ENCODE measurements at regions of chr17 and their contacts with region 1.

Region 1: GRCh38 chr17:41648411-41649195 is 24.2 kb upstream of the KRT17 start:
- DNase-seq: peak; percentile 82
- H3K4me3 ChIP-seq: peak overlapping the region; percentile 41
- H3K27ac ChIP-seq: peak overlapping the region; percentile 61
- H3K4me1 ChIP-seq: peaks cover 6% of the 10 kb centered on the region
- H3K27me3 ChIP-seq: no peaks in the 10 kb centered on the region
- CTCF ChIP-seq: peak; percentile 78

Region 2: GRCh38 chr17:40629842-40630241 is 1018.8 kb before region 1 on chr17:
- CTCF ChIA-PET with region 1: interaction called, 3 read pairs
- POLR2A ChIA-PET with region 1: interaction called, 16 read pairs
- intact Hi-C with region 1: no loop called
- DNase-seq: no peak
- H3K4me3 ChIP-seq: no peak overlapping the region
- H3K27ac ChIP-seq: no peak overlapping the region
- H3K4me1 ChIP-seq: no peaks in the 10 kb centered on the region
- H3K27me3 ChIP-seq: no peaks in the 10 kb centered on the region
- CTCF ChIP-seq: no peak

Region 3: DNA sequence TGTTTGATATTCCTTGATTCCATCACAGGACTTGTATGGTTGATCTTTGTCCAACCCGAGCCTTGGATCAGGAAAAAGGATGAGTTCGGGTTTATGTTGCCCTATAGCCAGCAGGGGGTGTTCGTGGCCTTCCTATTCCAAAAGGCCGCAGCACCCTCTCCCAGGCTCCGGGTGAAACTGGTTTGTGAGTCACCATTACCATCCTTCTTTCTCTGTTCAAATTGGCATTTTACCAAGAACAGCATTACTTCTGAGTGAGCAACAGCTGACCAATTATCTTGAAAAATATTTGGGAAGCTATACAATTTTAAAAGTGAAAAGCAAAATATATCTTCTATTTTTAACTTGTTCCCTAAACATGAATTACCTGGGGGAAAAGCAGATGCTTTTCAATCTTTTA is 739.3 kb before region 1 on chr17:
- CTCF ChIA-PET with region 1: interaction called, 5 read pairs
- POLR2A ChIA-PET with region 1: no interaction called
- intact Hi-C with region 1: loop called (anchors 5 kb)
- DNase-seq: peak; percentile 93
- H3K4me3 ChIP-seq: no peak overlapping the region
- H3K27ac ChIP-seq: peak overlapping the region; percentile 87
- H3K4me1 ChIP-seq: peaks cover 32% of the 10 kb centered on the region
- H3K27me3 ChIP-seq: no peaks in the 10 kb centered on the region
- CTCF ChIP-seq: peak; percentile 64

Region 4: DNA sequence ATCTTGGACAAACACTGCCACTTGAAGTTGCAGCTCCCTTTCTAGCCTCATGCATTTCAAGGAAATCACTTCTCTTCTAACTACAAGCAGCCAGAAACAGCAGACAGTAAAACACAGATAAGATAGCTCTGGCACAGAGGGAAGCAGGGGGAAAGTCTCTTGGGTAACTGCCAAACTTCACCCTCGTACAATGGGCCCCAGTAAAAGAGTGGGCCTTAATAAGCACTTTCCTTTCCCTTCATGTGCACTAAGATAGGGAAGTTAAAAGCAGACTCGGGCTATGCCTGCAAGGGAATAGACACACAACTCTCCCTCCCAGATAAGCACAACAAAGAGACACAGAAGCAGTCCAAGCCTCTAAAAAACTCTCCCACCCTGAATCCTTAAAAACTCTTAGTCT is 494.7 kb before region 1 on chr17:
- CTCF ChIA-PET with region 1: interaction called, 10 read pairs
- POLR2A ChIA-PET with region 1: no interaction called
- intact Hi-C with region 1: no loop called
- DNase-seq: peak; percentile 27
- H3K4me3 ChIP-seq: no peak overlapping the region
- H3K27ac ChIP-seq: peak overlapping the region; percentile 77
- H3K4me1 ChIP-seq: peaks cover 15% of the 10 kb centered on the region
- H3K27me3 ChIP-seq: no peaks in the 10 kb centered on the region
- CTCF ChIP-seq: no peak

Region 5: GRCh38 chr17:41186872-41187271 is 461.7 kb before region 1 on chr17:
- CTCF ChIA-PET with region 1: no interaction called
- POLR2A ChIA-PET with region 1: no interaction called
- intact Hi-C with region 1: no loop called
- DNase-seq: no peak
- H3K4me3 ChIP-seq: no peak overlapping the region
- H3K27ac ChIP-seq: no peak overlapping the region
- H3K4me1 ChIP-seq: no peaks in the 10 kb centered on the region
- H3K27me3 ChIP-seq: no peaks in the 10 kb centered on the region
- CTCF ChIP-seq: no peak

Region 6: GRCh38 chr17:41571561-41572434 is 76.8 kb before region 1 on chr17 and contains the start of gene KRT9:
- CTCF ChIA-PET with region 1: no interaction called
- POLR2A ChIA-PET with region 1: interaction called, 21 read pairs
- intact Hi-C with region 1: no loop called
- DNase-seq: no peak
- H3K4me3 ChIP-seq: no peak within 1 kb of the TSS
- H3K27ac ChIP-seq: no peak within 1 kb of the TSS
- H3K4me1 ChIP-seq: no peaks in the 10 kb centered on the region
- H3K27me3 ChIP-seq: no peaks in the 10 kb centered on the region
- CTCF ChIP-seq: no peak
- total RNA-seq, gene KRT9: not detected in 2 replicates

Region 7: GRCh38 chr17:41635121-41636097 is 13.2 kb before region 1 on chr17:
- CTCF ChIA-PET with region 1: interaction called, 10 read pairs
- POLR2A ChIA-PET with region 1: no interaction called
- intact Hi-C with region 1: no loop called
- DNase-seq: peak; percentile 55
- H3K4me3 ChIP-seq: no peak overlapping the region
- H3K27ac ChIP-seq: peak overlapping the region; percentile 40
- H3K4me1 ChIP-seq: peaks cover 15% of the 10 kb centered on the region
- H3K27me3 ChIP-seq: no peaks in the 10 kb centered on the region
- CTCF ChIP-seq: no peak

Measured in A673 (cell line).